AG04450 (cell line): ENCODE measurements at regions of chr3 and their contacts with region 1.

Region 1: DNA sequence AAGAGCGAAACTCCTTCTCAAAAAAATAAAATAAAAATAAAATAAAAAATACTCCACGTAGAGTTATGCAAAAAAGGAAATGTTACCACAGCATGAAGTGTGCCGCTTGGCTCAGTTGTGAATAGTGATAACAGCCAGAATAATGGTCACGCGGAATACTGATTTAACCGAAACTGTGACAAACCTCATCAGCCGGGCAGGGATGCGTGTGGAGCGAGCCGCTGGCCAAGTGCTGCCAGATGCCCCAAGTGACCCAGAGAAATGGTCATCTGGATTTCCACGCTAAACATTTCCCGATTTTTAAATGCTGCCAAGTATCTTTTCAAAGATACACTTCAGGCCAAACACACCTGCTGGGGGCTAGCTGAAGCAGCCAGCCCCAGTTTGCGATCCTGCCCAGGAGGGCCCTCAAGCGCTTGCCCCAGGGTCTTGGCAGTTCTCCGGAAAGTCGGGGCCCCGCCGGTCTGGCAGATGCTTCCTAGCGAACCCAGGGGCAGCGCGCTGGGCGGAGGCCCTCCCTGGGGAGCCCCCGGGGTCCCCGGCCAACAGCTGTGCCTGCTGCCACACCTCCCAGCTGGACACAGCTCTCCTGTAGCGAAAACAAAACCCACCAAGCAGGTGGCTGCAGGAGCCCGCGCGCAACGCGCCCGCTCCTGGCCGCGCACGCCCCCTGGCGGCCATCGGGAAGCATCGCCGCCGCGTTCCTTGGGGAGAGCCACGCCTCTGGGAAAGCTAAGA is 35.1 kb downstream of the CMTM6 start:
- DNase-seq: no peak
- H3K4me3 ChIP-seq: no peak overlapping the region
- H3K27ac ChIP-seq: no peak overlapping the region
- H3K27me3 ChIP-seq: no peaks in the 10 kb centered on the region
- CTCF ChIP-seq: peak; percentile 96

Region 2: GRCh38 chr3:32374788-32375595 is 92.5 kb before region 1 on chr3:
- CTCF ChIA-PET with region 1: interaction called, 96 read pairs
- POLR2A ChIA-PET with region 1: no interaction called
- DNase-seq: peak; percentile 44
- H3K4me3 ChIP-seq: no peak overlapping the region
- H3K27ac ChIP-seq: no peak overlapping the region
- H3K27me3 ChIP-seq: no peaks in the 10 kb centered on the region
- CTCF ChIP-seq: peak; percentile 67

Region 3: DNA sequence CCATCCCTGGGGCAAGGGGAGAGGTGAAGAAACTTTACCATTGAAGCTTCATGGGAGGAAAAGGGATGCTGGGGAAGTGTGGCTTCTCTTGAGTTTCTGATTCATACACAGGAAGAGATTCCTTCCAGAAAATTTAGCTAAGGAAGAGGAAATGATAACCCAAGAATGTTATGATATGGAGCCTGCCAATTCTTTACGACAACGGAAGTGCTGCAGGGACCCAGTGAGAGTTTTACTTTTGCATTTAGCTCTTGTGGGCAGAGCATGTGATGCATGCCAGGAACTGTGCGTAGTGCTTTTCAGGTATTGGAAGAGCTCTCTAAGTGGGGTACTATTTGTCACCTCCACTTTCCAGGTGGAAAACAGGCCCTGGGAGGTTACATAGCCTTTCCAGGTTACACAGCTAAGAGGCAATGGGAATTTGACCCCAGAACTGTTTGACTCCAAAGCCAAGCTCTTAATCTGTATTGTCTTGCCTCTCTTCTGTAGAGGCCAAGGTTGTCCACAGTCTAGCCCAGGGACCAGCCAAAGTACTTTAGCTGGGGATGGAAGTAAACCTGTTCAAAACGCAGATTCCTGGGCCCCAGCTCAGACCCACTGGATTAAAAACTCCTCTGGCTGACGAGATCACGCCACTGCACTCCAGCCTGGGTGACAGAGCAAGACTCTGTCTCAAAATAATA is 52.8 kb before region 1 on chr3:
- CTCF ChIA-PET with region 1: interaction called, 24 read pairs
- POLR2A ChIA-PET with region 1: interaction called, 3 read pairs
- DNase-seq: no peak
- H3K4me3 ChIP-seq: no peak overlapping the region
- H3K27ac ChIP-seq: peak overlapping the region; percentile 59
- H3K27me3 ChIP-seq: no peaks in the 10 kb centered on the region
- CTCF ChIP-seq: no peak

Region 4: DNA sequence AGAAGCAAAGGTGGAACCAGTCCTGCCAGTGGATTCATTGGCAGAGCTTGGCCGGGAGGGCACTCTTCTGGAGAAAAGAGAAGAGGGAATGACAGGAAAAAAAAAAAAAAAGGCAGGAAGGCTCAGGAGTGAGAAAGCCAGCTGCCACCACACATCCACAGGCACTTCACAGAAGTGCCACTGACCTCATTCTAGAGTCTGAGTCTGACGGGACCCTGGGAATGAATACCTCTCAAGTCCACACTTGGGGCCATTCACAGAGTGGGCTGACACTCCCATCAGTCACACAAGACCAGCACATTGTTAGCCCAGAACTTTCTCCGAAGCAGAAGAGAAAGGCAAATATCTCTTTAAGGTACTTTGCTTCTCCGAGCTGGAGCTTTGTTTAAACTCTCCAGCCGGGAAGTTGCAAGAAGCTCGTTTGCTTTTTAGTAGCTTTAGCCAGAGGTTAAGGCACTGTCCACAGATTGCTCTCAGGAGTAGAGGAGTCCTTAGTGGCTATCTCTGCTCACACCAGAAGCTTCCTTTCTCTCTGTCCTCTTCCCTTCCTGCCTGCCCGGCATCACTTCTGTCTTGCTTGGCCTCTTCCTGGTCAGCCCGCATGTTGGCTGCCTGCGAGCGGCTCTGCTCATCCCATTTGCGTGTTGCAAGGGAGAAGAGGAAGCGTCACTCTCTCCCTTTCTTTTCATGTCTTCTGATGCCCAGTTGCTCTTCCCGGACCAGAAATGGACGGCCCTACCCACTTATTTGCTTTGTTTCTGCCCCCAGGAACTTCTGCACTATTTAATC is 18.6 kb before region 1 on chr3:
- CTCF ChIA-PET with region 1: interaction called, 56 read pairs
- POLR2A ChIA-PET with region 1: no interaction called
- DNase-seq: no peak
- H3K4me3 ChIP-seq: no peak overlapping the region
- H3K27ac ChIP-seq: no peak overlapping the region
- H3K27me3 ChIP-seq: no peaks in the 10 kb centered on the region
- CTCF ChIP-seq: no peak